Stomach (tissue), 19 donors: ENCODE measurements at regions of chr12 and their contacts with region 1.

Region 1: DNA sequence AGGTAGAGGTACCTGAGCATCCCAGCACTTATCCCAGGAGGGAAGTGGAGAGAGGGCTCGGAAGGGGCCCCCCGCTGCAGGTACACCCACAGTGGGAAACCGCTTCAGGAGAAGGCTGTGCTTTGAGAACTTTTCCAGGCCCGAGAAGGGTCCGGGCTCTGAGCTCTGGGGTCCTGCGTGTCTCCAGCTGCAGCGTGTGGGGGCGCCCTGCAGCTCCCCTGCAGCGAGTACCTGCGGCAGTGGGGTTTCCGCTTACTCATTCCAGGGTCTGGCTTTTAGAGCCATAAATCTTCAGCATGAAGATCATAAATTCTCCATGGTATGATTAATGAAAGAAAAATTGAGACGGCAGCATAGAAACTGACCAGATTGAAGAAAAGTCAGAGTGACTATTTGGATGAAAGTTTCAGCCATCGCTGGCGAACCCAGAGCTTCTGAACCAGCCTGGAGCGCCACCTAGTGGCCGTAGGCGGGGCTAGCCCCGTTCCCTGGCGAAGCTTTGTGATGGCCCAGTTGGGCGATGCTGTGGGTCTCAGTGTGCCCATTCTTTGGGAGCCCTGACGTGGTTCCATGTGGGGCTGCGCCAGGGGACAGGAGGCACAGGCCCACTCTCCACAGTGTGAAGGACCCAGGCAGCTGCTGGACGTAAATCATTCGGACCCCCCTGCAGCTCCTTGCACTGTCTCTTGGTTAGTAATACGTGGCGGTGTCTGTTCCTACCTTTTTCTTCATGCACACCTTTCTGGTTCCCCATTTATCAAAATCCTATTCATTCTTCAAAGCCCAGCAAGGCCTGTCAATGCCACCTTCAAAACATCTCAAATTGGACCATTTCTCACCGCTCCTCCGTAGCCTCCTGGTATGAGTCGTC is 198.2 kb downstream of the TSPAN9 start:
- DNase-seq: peak; percentile 83 to 88
- H3K4me3 ChIP-seq: no peak overlapping the region
- H3K27ac ChIP-seq: no peak overlapping the region
- H3K4me1 ChIP-seq: peaks cover 0 to 13% (median 5%) of the 10 kb centered on the region in 4 donors
- H3K27me3 ChIP-seq: no peaks in the 10 kb centered on the region
- CTCF ChIP-seq: peak in 5 of 7 experiments; percentile 75 to 97 (median 92)
- EP300 ChIP-seq: no peak
- POLR2A ChIP-seq: no peak

Region 2: GRCh38 chr12:3065300-3065699 is 210.1 kb before region 1 on chr12:
- intact Hi-C with region 1: loop called (anchors 5 kb)
- DNase-seq: no peak
- H3K4me3 ChIP-seq: no peak overlapping the region
- H3K27ac ChIP-seq: no peak overlapping the region
- H3K4me1 ChIP-seq: peaks cover 0 to 8% (median 0%) of the 10 kb centered on the region in 4 donors
- H3K27me3 ChIP-seq: no peaks in the 10 kb centered on the region
- CTCF ChIP-seq: no peak
- EP300 ChIP-seq: no peak
- POLR2A ChIP-seq: no peak

Region 3: DNA sequence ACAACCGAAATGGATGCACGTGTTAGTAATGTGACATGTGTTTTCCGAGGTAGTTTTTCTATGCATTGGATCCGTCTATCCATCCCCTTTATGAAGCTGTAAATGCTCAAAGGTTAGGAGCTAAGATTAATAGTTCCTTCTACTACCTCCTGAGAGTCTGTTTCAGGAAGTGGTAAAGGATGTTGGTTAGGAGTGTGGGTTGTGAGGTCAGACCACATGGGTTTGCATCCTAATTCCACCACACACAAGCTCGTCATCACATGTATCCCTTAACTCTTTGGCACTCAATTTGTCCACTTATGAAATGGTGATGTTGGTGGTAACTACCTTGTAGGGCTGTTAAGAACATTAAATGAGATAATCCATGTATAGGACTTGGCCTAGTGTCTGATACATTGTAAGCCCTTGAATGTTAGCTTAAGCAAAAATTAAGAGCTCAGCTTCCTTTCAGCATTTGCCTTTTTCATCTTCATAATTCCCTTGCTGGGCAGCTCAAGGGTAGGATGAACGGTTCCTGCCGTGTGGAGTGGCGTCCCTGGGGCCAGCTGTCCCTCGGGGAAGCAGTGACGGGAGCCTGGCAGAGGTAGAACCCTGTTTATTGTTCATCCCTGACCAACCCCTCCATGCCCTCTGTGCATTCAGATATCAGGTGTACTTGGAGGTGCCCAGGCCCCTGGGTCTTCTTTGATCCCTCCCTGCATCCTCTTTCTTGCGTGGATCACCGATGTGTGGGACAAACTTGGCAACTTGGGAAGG is 145.9 kb before region 1 on chr12:
- intact Hi-C with region 1: loop called (anchors 5 kb)
- DNase-seq: no peak
- H3K4me3 ChIP-seq: no peak overlapping the region
- H3K27ac ChIP-seq: peak overlapping the region in 2 of 5 donors; percentile 4 to 49
- H3K4me1 ChIP-seq: peaks cover 7 to 34% (median 30%) of the 10 kb centered on the region in 4 donors
- H3K27me3 ChIP-seq: no peaks in the 10 kb centered on the region
- CTCF ChIP-seq: no peak
- EP300 ChIP-seq: no peak
- POLR2A ChIP-seq: no peak